Lower leg skin (tissue), 4 donors: ENCODE measurements at regions of chr7 and their contacts with region 1.

Region 1: DNA sequence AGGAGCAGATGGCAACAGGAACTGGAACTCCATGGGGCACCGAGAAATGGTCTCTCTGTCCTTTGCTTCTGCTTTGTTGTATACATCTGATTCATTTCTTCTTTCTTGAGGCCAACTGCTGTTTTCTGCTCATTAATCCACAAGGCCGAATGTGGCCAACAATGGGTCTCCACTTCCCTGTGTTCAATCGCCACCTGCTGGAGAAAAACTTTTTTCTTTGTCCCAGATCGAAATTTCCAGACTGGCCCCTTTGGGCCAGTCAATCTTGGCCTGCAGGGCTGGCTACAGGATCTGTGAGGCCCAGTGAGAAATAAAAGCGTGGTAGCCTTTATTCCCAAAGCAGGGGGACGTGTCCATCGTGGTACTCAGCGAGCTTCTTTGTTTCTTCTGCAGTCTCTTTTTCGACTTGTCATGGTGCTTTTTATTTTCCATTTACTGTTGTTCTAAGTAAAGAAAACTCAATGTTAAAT is 58.8 kb downstream of the PARP12 start:
- DNase-seq: no peak
- H3K4me3 ChIP-seq: no peak overlapping the region
- CTCF ChIP-seq: no peak
- POLR2A ChIP-seq: no peak

Region 2: GRCh38 chr7:139321071-139321745 is 682.7 kb before region 1 on chr7:
- intact Hi-C with region 1: no loop called
- DNase-seq: no peak
- H3K4me3 ChIP-seq: no peak overlapping the region
- CTCF ChIP-seq: no peak
- POLR2A ChIP-seq: no peak

Region 3: DNA sequence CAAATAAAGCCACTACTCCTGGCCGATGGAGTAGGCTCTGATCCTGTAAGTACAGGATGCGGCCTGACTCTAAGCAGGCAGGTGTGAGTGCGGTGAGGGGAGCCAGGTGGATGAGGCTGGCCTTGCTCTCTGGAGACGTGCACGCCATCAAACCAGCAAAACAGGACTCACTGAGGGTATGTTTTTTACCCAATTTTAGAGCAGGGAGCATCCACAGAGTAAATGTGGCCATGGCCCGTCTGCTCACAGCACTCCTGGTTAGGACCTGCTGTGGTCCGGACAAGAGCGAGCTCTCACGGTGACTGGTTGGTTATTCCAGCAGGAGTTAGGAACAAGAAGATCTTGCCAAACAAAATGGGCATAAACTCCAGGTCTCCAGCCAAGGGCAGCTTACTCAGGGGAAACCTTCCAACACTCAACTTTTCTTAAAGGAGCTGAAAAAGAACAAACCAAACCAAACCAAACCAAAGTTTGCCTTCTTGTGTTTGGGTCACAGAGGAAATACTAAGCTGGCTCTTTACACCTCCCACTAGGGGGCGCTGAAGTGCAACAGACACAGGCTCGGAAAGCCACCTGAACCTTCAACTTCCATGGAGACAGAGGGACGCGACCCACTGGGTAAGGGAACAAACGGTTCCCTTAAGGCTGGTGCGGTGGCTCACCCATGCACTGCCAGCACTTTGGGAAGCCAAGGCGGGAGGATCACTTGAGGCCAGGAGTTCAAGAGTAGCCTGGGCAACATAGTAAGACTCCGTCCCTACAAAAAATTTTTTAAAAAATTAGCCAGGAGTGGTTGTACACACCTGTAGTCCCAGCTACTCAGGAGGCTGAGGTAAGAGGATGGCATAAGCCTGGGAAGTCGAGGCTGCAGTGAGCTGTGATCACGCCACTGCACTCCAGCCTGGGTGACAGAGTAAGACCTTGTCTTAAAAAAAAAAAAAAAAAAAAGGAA is 358.1 kb before region 1 on chr7:
- intact Hi-C with region 1: loop called (anchors 5 kb)
- DNase-seq: peak; percentile 73 to 96
- H3K4me3 ChIP-seq: no peak overlapping the region
- CTCF ChIP-seq: peak in 1 of 3 donors; percentile 65
- POLR2A ChIP-seq: no peak

Region 4: GRCh38 chr7:139777948-139778841 is 225.8 kb before region 1 on chr7 and contains the start of gene HIPK2:
- intact Hi-C with region 1: loop called (anchors 10 kb)
- DNase-seq: peak in 1 of 2 donors; percentile 92
- H3K4me3 ChIP-seq: peak within 1 kb of the TSS; percentile 75
- CTCF ChIP-seq: no peak
- POLR2A ChIP-seq: no peak
- total RNA-seq, gene HIPK2: 4.5 to 14.9 (median 10.4) TPM

Region 5: GRCh38 chr7:140049339-140050024 is 45.5 kb after region 1 on chr7:
- intact Hi-C with region 1: no loop called
- DNase-seq: peak in 1 of 2 donors; percentile 42
- H3K4me3 ChIP-seq: no peak overlapping the region
- CTCF ChIP-seq: peak in 1 of 3 donors; percentile 23
- POLR2A ChIP-seq: no peak